ENCODE measurements at regions of chr1 and their contacts with region 1.

Region 1: DNA sequence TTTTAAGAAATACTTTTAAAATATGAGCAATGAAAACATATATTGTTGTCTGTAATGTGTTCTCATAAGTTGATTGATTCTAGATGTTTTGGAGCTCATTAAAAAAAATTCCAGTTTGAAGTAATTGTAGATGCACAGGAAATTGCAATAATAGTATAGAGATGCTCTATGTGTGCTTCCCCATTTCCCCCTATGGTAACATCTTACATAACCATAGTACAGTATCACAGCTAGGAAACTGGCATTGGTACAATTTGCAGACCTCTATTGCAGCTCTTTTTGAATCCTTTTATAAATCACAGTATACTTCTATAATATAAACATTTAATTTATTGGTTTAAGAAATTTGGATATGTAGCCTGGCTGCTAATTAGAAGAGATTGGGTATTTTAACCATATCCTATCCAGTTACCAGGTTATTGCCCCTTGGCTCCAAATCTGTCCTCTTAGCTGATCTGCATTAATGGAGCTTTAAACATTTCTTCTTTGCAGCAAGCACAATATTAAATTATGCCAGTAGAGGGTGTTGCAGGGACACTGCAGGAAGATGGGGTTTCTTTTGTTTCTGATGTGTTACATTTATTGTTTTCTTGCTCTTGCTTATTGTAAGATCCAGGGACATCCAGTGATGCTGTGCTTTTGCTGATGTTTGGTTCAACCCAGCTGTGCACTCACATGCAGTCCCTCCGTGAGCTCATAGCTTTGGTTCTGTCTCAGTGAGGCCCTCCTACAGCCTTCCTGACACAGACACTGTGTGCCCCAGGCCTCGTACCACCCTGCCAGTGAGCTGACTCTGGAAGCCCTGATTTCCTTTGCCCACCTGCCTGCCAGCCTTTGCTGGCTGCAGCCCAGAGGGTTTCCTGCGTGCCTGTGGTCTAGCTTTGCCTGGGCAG is 103.3 kb downstream of the RABGAP1L start:
- DNase-seq: no peak
- ATAC-seq: peak; percentile 74

Region 2: DNA sequence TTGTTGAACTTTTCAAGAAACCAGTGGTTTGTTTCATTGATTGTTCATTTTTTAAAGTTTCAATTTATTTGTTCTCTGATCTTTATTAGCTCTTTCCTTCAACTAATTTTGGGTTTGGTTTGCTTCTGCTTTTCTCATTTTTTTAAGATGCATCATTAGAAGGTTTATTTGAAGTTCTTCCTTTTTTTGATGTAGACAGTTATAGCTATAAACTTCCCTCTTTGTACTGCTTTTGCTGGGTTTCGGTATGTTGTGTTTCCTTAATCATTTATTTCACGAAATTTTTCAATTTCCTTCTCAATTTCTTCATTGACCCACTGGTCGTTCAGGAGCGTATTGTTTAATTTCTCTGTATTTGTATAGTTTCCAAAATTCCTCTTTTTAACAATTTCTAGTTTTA is 51.8 kb after region 1 on chr1:
- intact Hi-C with region 1: no loop called
- DNase-seq: no peak
- ATAC-seq: no peak

Region 3: GRCh38 chr1:174726167-174726879 is 463.7 kb after region 1 on chr1:
- intact Hi-C with region 1: loop called in 1 of 2 experiments (anchors 5 kb)
- DNase-seq: no peak
- ATAC-seq: peak; percentile 75

Region 4: DNA sequence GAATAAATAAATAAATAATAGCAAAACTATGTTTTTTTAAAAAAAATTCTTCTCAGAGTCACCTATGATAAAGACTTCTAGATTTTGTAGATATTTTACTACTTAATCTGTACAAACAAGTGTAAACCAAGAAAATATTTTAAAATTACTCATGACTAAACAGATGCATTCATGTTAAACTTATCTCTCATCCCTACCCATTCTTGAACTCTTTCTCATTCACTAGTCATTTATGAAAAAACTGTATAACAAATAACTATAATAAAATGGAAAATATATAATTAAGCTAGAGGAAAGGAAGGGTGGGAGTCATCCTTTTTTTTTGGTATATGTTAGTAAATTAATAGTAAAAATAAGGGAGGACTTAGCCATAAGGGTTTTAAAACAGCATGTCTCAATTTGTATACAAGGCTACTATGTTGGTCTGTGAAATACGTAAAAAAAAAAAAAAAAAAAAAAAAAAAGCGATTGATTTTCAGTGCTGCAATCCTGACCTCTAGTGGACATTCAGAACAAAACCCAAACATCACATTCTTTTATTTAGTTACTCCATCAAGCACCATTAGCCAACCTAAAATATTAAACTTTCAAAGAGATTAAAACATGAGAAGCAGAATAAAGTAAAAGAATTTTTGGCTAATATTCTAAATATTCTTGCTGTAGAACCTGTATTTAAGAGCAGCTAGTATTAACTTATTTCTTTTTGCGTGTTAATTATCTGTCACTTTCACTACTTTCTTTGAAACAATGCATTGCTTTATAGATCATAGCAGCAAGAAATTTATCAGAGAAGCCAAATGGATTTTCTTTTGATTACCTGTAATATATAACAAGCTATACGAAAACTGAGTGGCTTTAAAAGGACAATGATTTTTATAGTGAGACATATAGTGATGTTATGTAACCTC is 481.3 kb after region 1 on chr1:
- intact Hi-C with region 1: loop called in 1 of 2 experiments (anchors 5 kb)
- DNase-seq: no peak
- ATAC-seq: peak; percentile 34

Measured in left colon (tissue), 2 donors.